ENCODE measurements at regions of chr1 and their contacts with region 1.

Region 1: GRCh38 chr1:2821966-2822620 is 20.6 kb upstream of the TTC34 start:
- DNase-seq: peak; percentile 53 to 72 (median 56)
- ATAC-seq: peak; percentile 77 to 94 (median 82)
- H3K4me3 ChIP-seq: no peak overlapping the region
- H3K27ac ChIP-seq: no peak overlapping the region
- H3K4me1 ChIP-seq: no peaks in the 10 kb centered on the region
- H3K27me3 ChIP-seq: no peaks in the 10 kb centered on the region
- CTCF ChIP-seq: peak; percentile 44 to 80 (median 62)
- POLR2A ChIP-seq: no peak

Region 2: DNA sequence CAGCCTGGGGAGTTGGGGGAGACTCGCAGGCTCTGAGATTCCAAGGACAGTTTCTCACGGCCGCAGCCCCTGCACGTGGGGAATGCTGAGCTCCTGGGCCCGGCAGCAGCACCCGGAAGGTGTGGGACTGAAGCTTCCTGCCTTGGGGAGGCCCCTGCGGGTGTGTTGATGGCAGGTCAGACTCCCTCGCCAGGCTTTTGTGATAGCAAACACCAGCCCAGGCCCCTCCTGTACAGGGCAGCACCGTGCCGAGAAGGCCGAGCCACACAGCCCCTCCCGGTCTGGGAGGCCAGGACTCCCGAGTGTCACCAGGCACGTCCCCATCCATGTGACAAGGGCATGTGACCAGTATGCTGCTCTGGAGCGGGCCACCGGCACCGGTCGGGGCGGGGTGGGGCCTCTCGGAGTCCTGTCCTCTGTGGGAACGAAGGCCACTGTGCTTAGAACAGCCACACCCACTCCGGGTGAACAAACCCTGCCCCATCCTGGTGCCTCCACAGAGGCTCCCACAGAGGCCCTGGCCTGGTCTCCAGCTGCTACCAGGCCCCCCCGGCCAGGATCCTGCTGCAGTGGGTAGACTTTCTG is 601.2 kb after region 1 on chr1:
- intact Hi-C with region 1: loop called in 1 of 2 experiments (anchors 10 kb)
- DNase-seq: peak in 1 of 3 donors; percentile 58
- ATAC-seq: peak; percentile 27 to 77 (median 48)
- H3K4me3 ChIP-seq: no peak overlapping the region
- H3K27ac ChIP-seq: no peak overlapping the region
- H3K4me1 ChIP-seq: no peaks in the 10 kb centered on the region
- H3K27me3 ChIP-seq: no peaks in the 10 kb centered on the region
- CTCF ChIP-seq: no peak
- POLR2A ChIP-seq: no peak